K562 (cell line): ENCODE measurements at regions of chr18 and their contacts with region 1.

Region 1: DNA sequence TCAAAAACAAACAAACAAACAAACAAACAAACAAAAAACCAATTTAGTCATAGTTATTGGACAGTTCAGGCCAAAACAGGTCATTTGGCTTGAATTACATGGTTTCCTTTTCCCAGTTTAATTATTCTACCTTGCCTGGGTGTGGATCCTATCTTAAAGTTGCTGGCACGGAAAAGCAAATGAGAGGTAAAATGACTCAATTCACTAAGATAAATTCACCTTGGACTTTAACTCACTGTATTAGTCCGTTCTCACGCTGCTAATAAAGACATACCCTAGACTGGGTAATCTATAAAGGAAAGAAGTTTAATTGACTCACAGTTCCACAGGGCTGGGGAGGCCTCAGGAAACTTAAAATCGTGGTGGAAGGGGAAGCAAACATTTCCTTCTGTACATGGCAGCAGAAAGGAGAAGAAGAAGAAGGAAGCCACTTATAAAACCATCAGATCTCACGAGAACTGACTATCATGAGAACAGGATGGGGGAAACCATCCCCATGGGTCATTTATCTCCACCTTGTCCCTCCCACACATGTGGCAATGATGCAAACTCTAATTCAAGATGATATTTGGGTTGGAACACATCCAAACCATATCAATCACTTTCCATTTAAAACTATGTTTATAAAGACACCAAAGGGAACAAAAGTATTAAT is 22.5 kb upstream of the TRAPPC8 start:
- DNase-seq: no peak
- ATAC-seq: peak; percentile 31; the same call in 2 of the 3 replicates
- H3K4me3 ChIP-seq: no peak overlapping the region
- H3K27ac ChIP-seq: no peak overlapping the region
- H3K4me1 ChIP-seq: no peaks in the 10 kb centered on the region
- H3K27me3 ChIP-seq: peaks cover 6 to 19% of the 10 kb centered on the region in 2 experiments; a peak in 3 of 5 replicates
- CTCF ChIP-seq: no peak
- EP300 ChIP-seq: no peak
- POLR2A ChIP-seq: no peak
- RAD21 ChIP-seq: no peak

Region 2: GRCh38 chr18:31563778-31564177 is 401.7 kb before region 1 on chr18:
- CTCF ChIA-PET with region 1: no interaction called
- POLR2A ChIA-PET with region 1: no interaction called
- in situ Hi-C with region 1: loop called (anchors 5 kb)
- intact Hi-C with region 1: no loop called
- DNase-seq: peak; percentile 21 to 55 (median 40)
- ATAC-seq: peak; percentile 64; the same call in 2 of the 3 replicates
- H3K4me3 ChIP-seq: no peak overlapping the region
- H3K27ac ChIP-seq: no peak overlapping the region
- H3K4me1 ChIP-seq: no peaks in the 10 kb centered on the region
- H3K27me3 ChIP-seq: peaks cover 0 to 9% of the 10 kb centered on the region in 2 experiments; a peak in 3 of 5 replicates
- CTCF ChIP-seq: peak in 1 of 3 experiments; percentile 44; a peak in 2 of 6 replicates
- EP300 ChIP-seq: no peak
- POLR2A ChIP-seq: no peak
- RAD21 ChIP-seq: peak in 1 of 2 experiments; percentile 43; a peak in 2 of 4 replicates